ENCODE measurements at regions of chr1 and their contacts with region 1.

Region 1: GRCh38 chr1:204924013-204924967 is 53.6 kb downstream of the NFASC start:
- H3K4me3 ChIP-seq: no peak overlapping the region
- H3K27ac ChIP-seq: no peak overlapping the region
- H3K4me1 ChIP-seq: peaks cover 3% of the 10 kb centered on the region; the same call in 1 of the 2 replicates
- CTCF ChIP-seq: no peak

Region 2: DNA sequence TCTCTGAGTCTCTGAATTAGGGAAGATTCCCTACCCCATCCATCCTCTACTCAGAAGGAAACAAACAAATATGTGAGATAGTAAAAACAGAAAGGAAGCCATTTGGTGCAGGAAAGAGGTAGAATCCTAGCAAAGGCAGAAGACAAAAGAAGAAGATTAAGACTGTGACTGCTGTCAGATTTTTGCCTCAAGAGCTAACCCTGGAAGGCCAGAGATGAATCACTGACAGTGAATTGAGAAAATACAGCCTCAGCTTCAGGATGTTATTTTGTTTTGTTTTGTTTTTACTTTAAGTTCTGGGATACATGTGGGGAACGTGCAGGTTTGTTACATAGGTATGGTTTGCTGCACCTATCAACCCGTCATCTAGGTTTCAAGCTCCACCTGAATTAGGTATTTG is 255.6 kb after region 1 on chr1:
- CTCF ChIA-PET with region 1: no interaction called
- POLR2A ChIA-PET with region 1: interaction called, 10 read pairs
- H3K4me3 ChIP-seq: no peak overlapping the region
- H3K27ac ChIP-seq: no peak overlapping the region
- H3K4me1 ChIP-seq: no peaks in the 10 kb centered on the region
- CTCF ChIP-seq: no peak